ENCODE measurements at regions of chr6 and their contacts with region 1.

Region 1: DNA sequence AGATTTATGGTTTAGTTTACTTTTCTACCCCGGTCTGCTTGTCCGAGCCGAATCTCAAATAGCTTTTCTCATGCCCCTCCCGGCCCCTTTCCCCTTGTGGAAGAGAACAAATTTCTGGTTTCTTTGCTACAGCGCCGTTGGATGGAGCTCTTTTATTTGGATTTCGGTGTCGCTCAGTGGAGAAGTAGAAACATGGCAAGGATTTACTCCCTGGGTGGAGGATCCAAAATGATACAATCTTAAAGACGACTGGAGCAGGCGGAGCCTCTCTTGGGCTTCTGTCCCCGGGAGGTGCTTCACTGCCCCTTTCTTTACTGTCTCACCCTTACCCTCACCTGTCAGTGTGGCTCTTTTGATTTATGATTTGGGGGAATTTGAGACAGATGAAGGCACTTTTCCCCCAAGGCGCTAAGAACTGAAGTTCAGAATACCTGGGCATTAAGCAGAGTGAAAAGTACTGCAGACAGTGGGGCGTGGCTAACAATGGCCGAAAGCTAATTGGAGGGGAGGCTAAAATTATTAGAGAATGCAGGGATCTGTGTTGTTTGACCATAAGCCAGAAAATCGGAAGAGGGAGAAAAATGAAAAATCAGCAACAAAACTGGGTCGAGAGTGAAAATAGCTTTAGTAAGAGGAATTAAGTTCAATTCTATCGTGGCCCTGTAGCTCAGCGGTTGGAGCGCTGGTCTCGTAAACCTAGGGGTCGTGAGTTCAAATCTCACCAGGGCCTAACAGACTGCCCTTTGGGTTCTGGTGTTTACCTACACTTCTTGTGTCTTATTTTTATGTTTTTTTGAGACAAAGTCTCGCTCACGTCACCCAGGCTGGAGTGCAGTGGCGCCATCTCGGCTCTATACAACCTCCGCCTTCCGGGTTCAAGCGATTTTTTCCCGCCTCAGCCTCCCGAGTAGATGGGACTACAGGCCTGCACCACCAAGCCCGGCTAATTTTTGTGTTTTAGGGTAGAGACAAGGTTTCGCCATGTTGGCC is 145.1 kb upstream of the ZNF184 start:
- H3K4me3 Mint-ChIP-seq: no peak overlapping the region
- H3K27ac Mint-ChIP-seq: no peak overlapping the region
- H3K4me1 Mint-ChIP-seq: peaks cover 11% of the 10 kb centered on the region
- H3K27me3 Mint-ChIP-seq: peaks cover 52% of the 10 kb centered on the region

Region 2: DNA sequence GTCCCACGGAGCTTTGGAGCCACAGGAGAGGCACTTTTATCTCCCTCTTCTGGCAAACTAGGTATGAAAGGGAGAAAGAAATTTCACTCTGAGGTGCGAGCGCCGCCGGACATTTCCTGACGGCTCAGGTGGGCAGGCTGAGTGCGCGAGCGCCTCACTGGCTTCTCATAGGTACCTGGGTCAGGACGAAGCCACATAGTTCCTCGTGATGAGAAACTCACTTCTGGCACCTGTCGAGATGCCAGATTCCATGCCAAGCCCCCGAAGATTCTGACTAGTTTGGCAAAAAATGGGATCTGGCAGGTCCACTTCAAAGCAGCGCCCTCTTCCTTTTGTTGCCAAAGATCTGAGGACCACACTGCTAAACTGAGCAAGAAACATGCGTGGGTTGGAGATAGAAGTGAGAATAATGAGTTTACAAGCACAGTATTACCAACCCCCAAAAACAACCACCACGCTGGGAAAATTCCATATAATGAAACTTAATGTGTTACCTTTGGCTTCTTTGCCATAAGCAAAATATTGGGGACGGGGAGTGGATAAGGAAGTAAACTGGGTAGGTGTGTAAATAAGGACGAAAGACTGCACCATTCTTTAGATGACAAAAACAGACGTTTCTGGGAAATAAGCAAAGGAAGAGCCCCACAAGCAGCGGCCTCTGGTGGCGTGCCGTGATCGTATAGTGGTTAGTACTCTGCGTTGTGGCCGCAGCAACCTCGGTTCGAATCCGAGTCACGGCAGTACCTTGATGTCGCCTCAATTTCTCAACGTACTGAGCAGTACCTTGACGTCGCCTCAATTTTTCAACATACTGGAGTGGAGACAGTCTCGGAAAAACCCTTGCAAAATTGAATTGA is 460.3 kb before region 1 on chr6:
- intact Hi-C with region 1: loop called (anchors 10 kb)
- H3K4me3 Mint-ChIP-seq: peak overlapping the region; percentile 69
- H3K27ac Mint-ChIP-seq: peak overlapping the region; percentile 58
- H3K4me1 Mint-ChIP-seq: peaks cover 19% of the 10 kb centered on the region
- H3K27me3 Mint-ChIP-seq: peaks cover 19% of the 10 kb centered on the region

Region 3: DNA sequence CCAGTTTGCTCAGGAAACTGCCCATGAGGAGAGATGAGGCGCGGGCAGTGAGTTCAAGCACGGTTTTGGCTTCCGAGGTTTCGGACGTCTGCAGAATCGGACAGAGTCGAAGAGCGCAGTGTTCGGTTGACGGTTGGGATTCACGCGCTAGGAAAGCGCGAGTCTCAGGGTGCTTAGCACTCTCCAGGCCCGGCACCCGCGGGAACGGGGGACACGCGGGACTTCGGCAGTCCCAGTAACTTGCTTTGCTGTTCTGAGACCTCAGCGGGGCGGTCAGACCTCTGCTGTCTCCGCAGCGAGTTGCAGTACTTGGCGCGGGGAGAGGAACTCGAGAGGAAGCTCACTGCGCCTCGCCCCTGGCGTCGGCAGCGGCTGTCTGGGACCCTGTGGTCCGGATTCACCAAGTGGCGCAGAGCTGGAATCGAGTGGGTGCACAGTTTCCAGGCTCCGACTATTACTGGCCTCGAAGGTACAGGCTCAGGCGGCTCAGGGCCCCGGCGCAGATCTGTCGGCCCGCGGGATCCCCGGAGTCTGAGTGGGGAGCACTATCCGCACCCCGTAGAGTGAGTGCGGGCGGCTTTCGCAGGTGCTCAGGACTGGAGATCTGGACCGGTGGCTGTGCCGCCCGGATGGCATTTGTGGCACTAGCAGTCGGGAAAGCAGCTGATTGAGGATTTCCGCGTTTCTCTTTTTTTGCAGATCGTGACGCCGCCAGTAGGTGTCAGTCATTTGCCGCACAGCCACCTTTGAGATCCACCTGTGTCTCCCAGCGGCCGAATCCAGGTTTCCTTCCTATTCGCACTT is 305.6 kb before region 1 on chr6 and contains the start of gene POM121L2:
- intact Hi-C with region 1: no loop called
- H3K4me3 Mint-ChIP-seq: peak within 1 kb of the TSS; percentile 70
- H3K27ac Mint-ChIP-seq: no peak within 1 kb of the TSS
- H3K4me1 Mint-ChIP-seq: peaks cover 14% of the 10 kb centered on the region
- H3K27me3 Mint-ChIP-seq: peaks cover 68% of the 10 kb centered on the region

Region 4: GRCh38 chr6:27332692-27333641 is 285.0 kb before region 1 on chr6:
- intact Hi-C with region 1: no loop called
- H3K4me3 Mint-ChIP-seq: no peak overlapping the region
- H3K27ac Mint-ChIP-seq: no peak overlapping the region
- H3K4me1 Mint-ChIP-seq: no peaks in the 10 kb centered on the region
- H3K27me3 Mint-ChIP-seq: peaks cover 31% of the 10 kb centered on the region

Measured in dendritic cell treated with granulocyte-macrophage colony-stimulating factor and Interleukin-4, amounts not matched to agents 40 ng/mL and 50 ng/mL, for 4 days (primary cell).